ENCODE measurements at regions of chr3 and their contacts with region 1.

Region 1: GRCh38 chr3:74267588-74268184 is 346.8 kb downstream of the CNTN3 start:
- DNase-seq: peak; percentile 36 to 60
- H3K4me3 ChIP-seq: no peak overlapping the region
- H3K4me3 Mint-ChIP-seq: no peak overlapping the region
- H3K27ac Mint-ChIP-seq: no peak overlapping the region
- H3K4me1 ChIP-seq: no peaks in the 10 kb centered on the region
- H3K4me1 Mint-ChIP-seq: peaks cover 7% of the 10 kb centered on the region
- H3K27me3 ChIP-seq: no peaks in the 10 kb centered on the region
- H3K27me3 Mint-ChIP-seq: peaks cover 4% of the 10 kb centered on the region
- CTCF ChIP-seq: peak; percentile 59 to 79

Region 2: DNA sequence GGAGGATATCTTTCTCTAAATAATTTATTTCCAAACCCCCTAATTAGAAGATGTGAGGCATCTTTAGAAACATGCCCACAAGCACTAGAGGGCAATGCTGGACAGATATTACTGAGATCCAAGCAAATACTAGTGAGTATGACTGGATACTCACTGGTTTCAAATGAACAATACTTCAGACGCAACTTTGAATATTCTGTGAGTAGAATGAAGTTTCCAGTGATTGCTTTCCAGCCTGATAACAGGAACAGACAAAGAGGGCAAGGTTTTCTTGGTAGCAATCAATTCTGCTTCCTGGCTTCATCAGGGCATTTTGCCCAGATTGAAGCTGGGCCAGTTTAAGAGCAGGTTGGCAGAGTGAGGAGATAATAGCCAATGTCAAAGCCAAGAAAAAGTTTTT is 200.4 kb before region 1 on chr3:
- CTCF ChIA-PET with region 1: no interaction called
- POLR2A ChIA-PET with region 1: no interaction called
- intact Hi-C with region 1: loop called (anchors 2 kb)
- DNase-seq: peak in 1 of 2 experiments; percentile 11
- H3K4me3 ChIP-seq: no peak overlapping the region
- H3K4me3 Mint-ChIP-seq: no peak overlapping the region
- H3K27ac Mint-ChIP-seq: no peak overlapping the region
- H3K4me1 ChIP-seq: no peaks in the 10 kb centered on the region
- H3K4me1 Mint-ChIP-seq: no peaks in the 10 kb centered on the region
- H3K27me3 ChIP-seq: no peaks in the 10 kb centered on the region
- H3K27me3 Mint-ChIP-seq: peaks cover 17% of the 10 kb centered on the region
- CTCF ChIP-seq: peak in 1 of 2 experiments; percentile 8

Region 3: DNA sequence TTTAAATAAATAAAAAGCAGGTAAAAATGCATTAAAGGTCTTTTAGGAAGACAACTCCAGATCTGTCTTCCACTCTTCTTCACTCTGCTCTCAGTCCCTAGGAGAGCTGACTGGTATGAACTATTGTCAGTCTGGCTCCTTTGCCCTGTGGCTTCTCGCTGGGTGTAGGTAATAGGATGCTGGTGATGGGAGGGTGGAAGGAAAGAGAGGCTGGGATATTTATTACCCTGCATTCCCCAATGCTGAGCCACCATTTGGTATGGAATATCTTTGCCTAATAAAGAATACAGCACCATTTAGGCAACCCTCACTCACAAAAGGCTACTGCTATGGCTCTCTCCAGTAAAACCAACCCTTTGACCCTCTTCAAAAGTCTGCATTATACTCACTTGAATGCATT is 19.9 kb after region 1 on chr3:
- CTCF ChIA-PET with region 1: no interaction called
- POLR2A ChIA-PET with region 1: no interaction called
- intact Hi-C with region 1: no loop called
- DNase-seq: no peak
- H3K4me3 ChIP-seq: no peak overlapping the region
- H3K4me3 Mint-ChIP-seq: no peak overlapping the region
- H3K27ac Mint-ChIP-seq: no peak overlapping the region
- H3K4me1 ChIP-seq: no peaks in the 10 kb centered on the region
- H3K4me1 Mint-ChIP-seq: no peaks in the 10 kb centered on the region
- H3K27me3 ChIP-seq: no peaks in the 10 kb centered on the region
- H3K27me3 Mint-ChIP-seq: peaks cover 3% of the 10 kb centered on the region
- CTCF ChIP-seq: no peak

Region 4: DNA sequence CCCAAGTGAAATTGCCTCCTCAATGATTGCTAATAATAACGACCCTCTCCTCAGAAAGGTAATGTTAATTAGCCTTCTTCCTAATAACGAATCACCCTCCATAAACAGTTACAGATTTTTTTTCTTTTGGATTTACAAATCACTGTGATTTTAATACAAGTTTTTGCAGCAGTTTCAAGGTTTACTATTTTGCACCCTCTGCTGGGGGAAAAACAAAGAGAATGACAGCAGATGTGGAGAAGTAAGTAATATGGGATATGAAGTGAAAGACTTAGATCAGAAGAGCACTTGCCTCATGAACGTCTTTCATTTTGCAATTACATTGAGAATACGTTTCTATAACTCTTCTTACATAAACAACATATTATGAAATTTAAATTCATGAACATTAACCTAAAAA is 362.9 kb after region 1 on chr3:
- CTCF ChIA-PET with region 1: no interaction called
- POLR2A ChIA-PET with region 1: no interaction called
- intact Hi-C with region 1: loop called (anchors 1 kb)
- DNase-seq: no peak
- H3K4me3 ChIP-seq: no peak overlapping the region
- H3K4me3 Mint-ChIP-seq: no peak overlapping the region
- H3K27ac Mint-ChIP-seq: no peak overlapping the region
- H3K4me1 ChIP-seq: no peaks in the 10 kb centered on the region
- H3K4me1 Mint-ChIP-seq: no peaks in the 10 kb centered on the region
- H3K27me3 ChIP-seq: no peaks in the 10 kb centered on the region
- H3K27me3 Mint-ChIP-seq: peaks cover 3% of the 10 kb centered on the region
- CTCF ChIP-seq: peak in 1 of 2 experiments; percentile 23

Region 5: GRCh38 chr3:75001330-75001729 is 733.6 kb after region 1 on chr3:
- CTCF ChIA-PET with region 1: no interaction called
- POLR2A ChIA-PET with region 1: no interaction called
- intact Hi-C with region 1: loop called (anchors 10 kb)
- DNase-seq: no peak
- H3K4me3 ChIP-seq: no peak overlapping the region
- H3K4me3 Mint-ChIP-seq: no peak overlapping the region
- H3K27ac Mint-ChIP-seq: no peak overlapping the region
- H3K4me1 ChIP-seq: no peaks in the 10 kb centered on the region
- H3K4me1 Mint-ChIP-seq: no peaks in the 10 kb centered on the region
- H3K27me3 ChIP-seq: no peaks in the 10 kb centered on the region
- H3K27me3 Mint-ChIP-seq: no peaks in the 10 kb centered on the region
- CTCF ChIP-seq: peak in 1 of 2 experiments; percentile 14